ENCODE measurements at regions of chr1 and their contacts with region 1.

Region 1: DNA sequence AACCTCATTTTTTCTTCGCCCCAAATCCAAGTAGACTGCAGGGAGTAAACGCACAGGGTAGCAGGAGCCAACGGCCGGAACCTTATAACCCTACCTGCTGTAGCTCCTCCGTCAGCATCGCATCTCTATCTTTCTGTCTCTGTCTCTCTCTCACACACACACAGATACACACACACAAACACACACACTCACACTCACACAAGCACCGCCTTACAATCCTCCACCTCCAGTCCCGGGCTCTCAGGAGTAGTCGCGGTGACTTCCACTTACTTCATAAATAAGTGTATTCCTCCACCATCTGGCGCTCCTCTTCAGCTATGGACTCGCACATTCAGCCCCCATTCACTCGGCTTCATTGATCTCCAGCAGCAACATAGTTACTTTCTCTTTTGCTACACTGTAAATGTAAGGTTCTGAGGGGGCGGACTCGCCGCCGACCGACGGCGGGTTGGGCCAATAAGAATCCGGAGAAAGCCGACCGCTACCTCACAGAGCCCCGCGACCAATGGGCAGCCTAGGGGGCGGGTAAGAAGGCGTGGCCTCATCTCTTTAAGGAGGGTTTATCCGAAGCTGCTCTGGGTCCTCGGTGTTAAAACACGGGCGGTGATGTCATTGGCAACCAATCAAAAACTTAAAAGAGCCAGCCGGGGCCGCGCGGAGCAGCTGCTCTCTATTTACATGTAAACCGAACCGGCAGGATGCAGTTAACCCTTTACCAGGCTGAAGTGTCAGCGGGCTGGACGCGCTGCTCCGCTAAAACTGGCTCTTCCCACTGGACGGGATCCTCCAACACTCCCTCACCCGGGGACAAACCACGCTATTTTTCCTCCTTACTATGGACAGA is at the start of gene DUSP10:
- DNase-seq: peak; percentile 99
- H3K4me3 Mint-ChIP-seq: no peak within 1 kb of the TSS
- H3K27ac Mint-ChIP-seq: peak within 1 kb of the TSS; percentile 82
- H3K4me1 Mint-ChIP-seq: peaks cover 11% of the 10 kb centered on the region
- H3K27me3 Mint-ChIP-seq: no peaks in the 10 kb centered on the region
- total RNA-seq, gene DUSP10: 18.8 to 20.5 TPM

Region 2: GRCh38 chr1:221678014-221678413 is 63.9 kb before region 1 on chr1:
- CTCF ChIA-PET with region 1: no interaction called
- POLR2A ChIA-PET with region 1: interaction called, 10 read pairs
- DNase-seq: no peak
- H3K4me3 Mint-ChIP-seq: no peak overlapping the region
- H3K27ac Mint-ChIP-seq: no peak overlapping the region
- H3K4me1 Mint-ChIP-seq: peaks cover 7% of the 10 kb centered on the region
- H3K27me3 Mint-ChIP-seq: no peaks in the 10 kb centered on the region

Region 3: GRCh38 chr1:221708987-221709386 is 32.9 kb before region 1 on chr1:
- CTCF ChIA-PET with region 1: interaction called, 82 read pairs
- POLR2A ChIA-PET with region 1: interaction called, 299 read pairs
- DNase-seq: peak; percentile 41
- H3K4me3 Mint-ChIP-seq: no peak overlapping the region
- H3K27ac Mint-ChIP-seq: peak overlapping the region; percentile 76
- H3K4me1 Mint-ChIP-seq: peaks cover 74% of the 10 kb centered on the region
- H3K27me3 Mint-ChIP-seq: no peaks in the 10 kb centered on the region

Region 4: DNA sequence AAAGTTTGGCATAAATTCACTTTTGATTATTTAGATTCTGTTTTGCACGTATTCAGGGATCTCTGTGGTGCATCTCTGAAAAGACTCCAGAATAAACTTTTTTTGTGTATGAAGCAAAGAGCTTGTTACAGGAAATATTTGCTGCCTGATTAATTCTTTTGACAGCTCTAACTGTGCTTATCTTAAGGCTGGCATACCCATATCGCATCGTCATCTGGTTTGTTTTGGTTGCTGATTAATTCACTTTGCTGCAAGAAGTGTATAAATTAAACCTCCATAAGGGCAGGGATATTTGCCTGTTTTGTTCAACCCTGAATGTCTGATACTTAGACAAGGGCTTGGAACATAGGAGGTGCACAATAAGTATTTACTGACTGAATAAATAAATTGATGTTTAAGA is 17.5 kb after region 1 on chr1:
- CTCF ChIA-PET with region 1: interaction called, 3 read pairs
- POLR2A ChIA-PET with region 1: interaction called, 28 read pairs
- DNase-seq: no peak
- H3K4me3 Mint-ChIP-seq: no peak overlapping the region
- H3K27ac Mint-ChIP-seq: no peak overlapping the region
- H3K4me1 Mint-ChIP-seq: peaks cover 52% of the 10 kb centered on the region
- H3K27me3 Mint-ChIP-seq: no peaks in the 10 kb centered on the region

Region 5: GRCh38 chr1:221829327-221830015 is 87.5 kb after region 1 on chr1:
- CTCF ChIA-PET with region 1: interaction called, 5 read pairs
- POLR2A ChIA-PET with region 1: interaction called, 85 read pairs
- DNase-seq: peak; percentile 73
- H3K4me3 Mint-ChIP-seq: peak overlapping the region; percentile 55
- H3K27ac Mint-ChIP-seq: peak overlapping the region; percentile 95
- H3K4me1 Mint-ChIP-seq: peaks cover 80% of the 10 kb centered on the region
- H3K27me3 Mint-ChIP-seq: no peaks in the 10 kb centered on the region